Gastrocnemius medialis (tissue), 4 donors: ENCODE measurements at regions of chr4 and their contacts with region 1.

Region 1: DNA sequence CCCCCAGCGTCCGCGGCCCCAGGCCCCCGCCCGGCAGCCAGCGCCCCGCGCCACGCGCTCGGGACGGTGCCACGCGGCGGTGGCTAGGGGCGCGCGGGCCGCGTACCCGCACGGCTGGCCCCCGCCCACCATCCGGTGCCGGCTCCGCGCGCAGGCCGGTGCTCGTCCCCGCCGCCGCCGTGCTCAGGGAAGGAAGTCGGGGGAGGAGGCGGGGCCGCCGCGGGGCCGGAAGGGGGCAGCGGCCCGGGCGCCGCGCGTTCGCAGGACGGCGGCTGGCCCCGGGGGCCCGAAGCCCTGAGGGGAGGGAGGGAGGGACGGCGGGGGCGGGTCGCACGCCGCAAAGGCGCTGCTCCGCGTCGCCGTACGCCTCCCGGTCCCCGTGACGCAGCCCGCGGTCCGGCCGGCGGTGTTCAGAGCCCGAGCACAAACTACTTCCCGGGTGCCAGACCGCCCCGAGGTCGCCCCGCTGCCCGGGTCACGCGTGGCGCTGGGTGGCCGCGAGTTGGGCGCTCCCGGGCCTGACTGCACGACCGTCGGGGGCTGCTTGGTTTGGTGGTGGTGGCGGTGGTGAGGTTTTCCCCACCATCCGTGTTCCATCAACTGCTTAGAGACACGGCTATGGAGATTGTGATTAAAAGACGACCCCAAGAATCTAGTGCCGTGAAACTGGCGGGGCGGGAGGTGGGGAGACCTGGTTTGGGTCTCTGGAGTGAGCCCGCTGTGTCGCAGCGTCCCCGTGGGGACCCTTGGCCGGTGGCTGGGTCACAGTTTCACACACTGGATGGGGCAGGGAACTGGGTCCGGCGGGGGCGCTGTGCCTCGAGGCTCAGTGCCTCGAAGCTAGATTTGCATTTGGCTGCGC is at the start of gene DCTD:
- DNase-seq: peak; percentile 52 to 59
- ATAC-seq: peak; percentile 81 to 88
- H3K4me3 ChIP-seq: peak within 1 kb of the TSS; percentile 71 to 99 (median 78)
- H3K27ac ChIP-seq: peak within 1 kb of the TSS; percentile 87 to 98 (median 88)
- H3K4me1 ChIP-seq: peaks cover 5 to 6% of the 10 kb centered on the region in 2 donors
- H3K27me3 ChIP-seq: no peaks in the 10 kb centered on the region
- CTCF ChIP-seq: peak in 2 of 5 experiments; percentile 35 to 46
- POLR2A ChIP-seq: peak in 1 of 2 donors; percentile 46
- total RNA-seq, gene DCTD: 32.2 to 48.2 (median 39.1) TPM

Region 2: GRCh38 chr4:183098723-183099536 is 181.5 kb after region 1 on chr4 and contains the start of gene WWC2:
- in situ Hi-C with region 1: no loop called
- intact Hi-C with region 1: loop called (anchors 5 kb)
- DNase-seq: peak; percentile 68 to 72
- ATAC-seq: peak; percentile 82 to 86
- H3K4me3 ChIP-seq: peak within 1 kb of the TSS; percentile 80 to 91 (median 86)
- H3K27ac ChIP-seq: peak within 1 kb of the TSS; percentile 79 to 88 (median 85)
- H3K4me1 ChIP-seq: peaks cover 13 to 15% of the 10 kb centered on the region in 2 donors
- H3K27me3 ChIP-seq: no peaks in the 10 kb centered on the region
- CTCF ChIP-seq: no peak
- POLR2A ChIP-seq: peak; percentile 47 to 69
- total RNA-seq, gene WWC2: 4.5 to 10.7 (median 8.6) TPM

Region 3: GRCh38 chr4:183175631-183176232 is 258.3 kb after region 1 on chr4:
- in situ Hi-C with region 1: no loop called
- intact Hi-C with region 1: no loop called
- DNase-seq: no peak
- ATAC-seq: no peak
- H3K4me3 ChIP-seq: no peak overlapping the region
- H3K27ac ChIP-seq: no peak overlapping the region
- H3K4me1 ChIP-seq: peaks cover 0 to 4% of the 10 kb centered on the region in 2 donors
- H3K27me3 ChIP-seq: no peaks in the 10 kb centered on the region
- CTCF ChIP-seq: no peak
- POLR2A ChIP-seq: no peak

Region 4: DNA sequence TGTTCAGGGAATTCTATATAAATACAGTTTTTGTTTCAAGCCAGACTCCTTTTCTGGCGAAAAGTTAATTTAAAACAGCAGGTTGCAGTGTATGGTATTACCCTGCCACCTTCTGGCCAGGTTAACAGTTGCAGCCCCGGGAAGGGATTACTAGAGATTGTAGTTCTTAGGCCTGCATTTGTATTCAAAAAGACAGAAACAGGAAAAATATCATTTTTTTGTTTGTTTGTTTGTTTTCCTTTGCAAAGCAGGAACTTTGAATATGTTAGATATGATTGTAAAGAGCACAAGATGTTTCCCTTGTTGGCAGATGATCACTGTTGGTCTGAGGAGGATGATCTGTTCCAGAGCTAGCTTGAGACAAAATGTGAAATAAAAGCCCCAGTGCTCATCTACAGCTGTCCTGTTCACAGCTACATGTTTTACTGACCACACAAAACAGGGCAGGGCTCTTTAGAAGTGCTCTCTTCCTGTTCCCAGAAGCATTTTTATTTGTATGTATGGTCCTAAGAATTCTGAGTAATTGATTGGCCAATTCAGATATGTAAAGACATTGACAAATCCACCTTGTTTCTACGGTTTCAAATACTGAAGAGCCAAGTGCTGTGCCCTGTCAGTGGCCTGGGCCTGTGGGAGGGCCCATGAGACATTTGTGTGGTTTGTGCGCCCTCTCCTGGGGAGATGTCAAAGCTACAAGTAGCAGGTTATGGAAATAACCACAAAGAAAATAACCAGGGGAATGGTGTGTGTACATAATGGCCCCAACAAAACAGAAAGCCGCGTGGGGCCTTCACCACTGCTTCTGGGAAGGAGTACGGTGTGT is 344.8 kb after region 1 on chr4:
- in situ Hi-C with region 1: no loop called
- intact Hi-C with region 1: loop called (anchors 5 kb)
- DNase-seq: peak; percentile 35 to 67
- ATAC-seq: peak; percentile 86 to 88
- H3K4me3 ChIP-seq: no peak overlapping the region
- H3K27ac ChIP-seq: peak overlapping the region in 3 of 4 donors; percentile 4 to 59 (median 42)
- H3K4me1 ChIP-seq: peaks cover 0 to 4% of the 10 kb centered on the region in 2 donors
- H3K27me3 ChIP-seq: no peaks in the 10 kb centered on the region
- CTCF ChIP-seq: peak; percentile 66 to 80 (median 73)
- POLR2A ChIP-seq: no peak